ENCODE measurements at regions of chr16 and their contacts with region 1.

Region 1: GRCh38 chr16:6016530-6017184 is 919.1 kb upstream of the EEF2KMT start:
- DNase-seq: no peak
- H3K4me3 ChIP-seq: no peak overlapping the region
- H3K27ac ChIP-seq: no peak overlapping the region
- H3K4me1 ChIP-seq: no peaks in the 10 kb centered on the region
- H3K27me3 ChIP-seq: peaks cover 17% of the 10 kb centered on the region
- CTCF ChIP-seq: no peak

Region 2: DNA sequence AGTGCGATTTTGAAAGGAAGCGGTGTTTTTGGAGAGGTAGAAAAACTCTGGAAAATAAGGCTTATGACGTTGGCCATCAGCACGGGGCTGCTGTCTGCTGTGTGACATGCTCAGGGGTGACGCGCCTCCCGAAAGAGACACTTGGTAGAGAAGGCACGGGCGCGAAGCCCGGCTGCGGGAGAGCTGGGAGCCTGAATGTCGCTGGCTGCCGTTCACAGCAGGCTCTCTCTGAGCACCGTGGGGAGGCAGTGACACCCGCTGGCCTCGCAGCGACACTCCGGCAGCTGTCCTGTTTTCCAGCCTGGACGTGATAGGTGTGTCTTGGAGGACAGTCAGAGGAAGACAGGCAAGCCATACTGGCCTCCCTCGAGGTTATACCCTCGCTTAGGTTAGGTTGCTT is 556.9 kb after region 1 on chr16:
- intact Hi-C with region 1: loop called (anchors 10 kb)
- DNase-seq: peak; percentile 22
- H3K4me3 ChIP-seq: no peak overlapping the region
- H3K27ac ChIP-seq: no peak overlapping the region
- H3K4me1 ChIP-seq: no peaks in the 10 kb centered on the region
- H3K27me3 ChIP-seq: no peaks in the 10 kb centered on the region
- CTCF ChIP-seq: peak; percentile 25